ENCODE measurements at regions of chr14 and their contacts with region 1.

Region 1: DNA sequence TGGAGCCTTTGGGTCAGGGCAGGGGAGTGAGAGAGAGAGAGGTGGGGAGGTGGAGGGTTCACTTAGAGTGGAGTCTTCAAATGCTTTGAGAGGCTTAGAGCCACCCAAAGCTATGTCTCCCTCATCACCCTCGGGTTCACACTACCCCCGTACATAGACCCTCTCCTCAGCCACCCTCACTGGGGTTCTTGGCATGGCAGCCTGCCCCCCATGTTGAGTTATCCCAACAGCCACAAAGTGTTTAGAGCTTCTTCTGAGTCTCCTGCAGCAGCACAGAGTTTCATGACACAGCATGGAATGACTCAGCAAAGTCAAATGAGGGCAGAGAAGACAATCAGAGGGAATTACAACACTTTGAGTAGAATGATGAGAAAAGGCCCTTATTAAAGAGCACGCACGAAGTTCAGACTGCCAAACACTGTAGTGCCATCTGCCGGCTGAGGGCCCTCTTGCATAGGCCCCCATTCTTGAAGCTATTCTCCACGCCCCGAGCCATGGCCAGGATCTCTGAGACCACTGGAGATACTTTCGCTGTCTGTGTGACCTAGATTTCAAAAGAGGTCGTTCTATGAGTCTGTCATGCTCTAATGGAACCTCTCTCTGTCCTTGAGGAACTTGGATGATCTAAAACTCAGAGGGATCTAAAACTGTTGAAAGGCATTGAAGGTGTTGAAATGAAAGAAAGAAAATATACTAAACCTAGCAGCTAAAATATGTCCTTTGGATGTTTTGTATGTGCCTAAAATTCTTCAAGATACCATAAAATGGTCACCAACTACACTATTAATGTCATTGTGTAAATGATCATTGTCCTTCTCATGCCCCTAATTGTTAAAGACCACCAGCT is 221.9 kb downstream of the PELI2 start:
- DNase-seq: peak; percentile 68 to 93 (median 85)

Region 2: GRCh38 chr14:55707365-55707804 is 632.7 kb before region 1 on chr14:
- intact Hi-C with region 1: loop called (anchors 10 kb)
- DNase-seq: peak in 1 of 42 donors; percentile 24

Measured in head of caudate nucleus (tissue), 42 donors.